IMR-90 (cell line): ENCODE measurements at regions of chr5 and their contacts with region 1.

Region 1: GRCh38 chr5:107673368-107674136 is 2.8 kb upstream of the EFNA5 start:
- DNase-seq: peak; percentile 87
- ATAC-seq: peak; percentile 62
- H3K4me3 ChIP-seq: peak overlapping the region; percentile 52
- H3K27ac ChIP-seq: no peak overlapping the region
- H3K4me1 ChIP-seq: no peaks in the 10 kb centered on the region
- H3K27me3 ChIP-seq: peaks cover 8% of the 10 kb centered on the region; the same call in 1 of the 2 replicates
- CTCF ChIP-seq: peak; percentile 96
- POLR2A ChIP-seq: no peak
- RAD21 ChIP-seq: peak; percentile 94

Region 2: GRCh38 chr5:106269252-106269843 is 1404.2 kb before region 1 on chr5:
- CTCF ChIA-PET with region 1: interaction called, 4 read pairs
- POLR2A ChIA-PET with region 1: no interaction called
- dilution Hi-C with region 1: no loop called
- in situ Hi-C with region 1: loop called (anchors 10 kb)
- intact Hi-C with region 1: loop called (anchors 1 kb)
- DNase-seq: peak; percentile 57
- ATAC-seq: peak; percentile 69
- H3K4me3 ChIP-seq: no peak overlapping the region
- H3K27ac ChIP-seq: no peak overlapping the region
- H3K4me1 ChIP-seq: no peaks in the 10 kb centered on the region
- H3K27me3 ChIP-seq: no peaks in the 10 kb centered on the region
- CTCF ChIP-seq: peak; percentile 71
- POLR2A ChIP-seq: no peak
- RAD21 ChIP-seq: peak; percentile 73

Region 3: DNA sequence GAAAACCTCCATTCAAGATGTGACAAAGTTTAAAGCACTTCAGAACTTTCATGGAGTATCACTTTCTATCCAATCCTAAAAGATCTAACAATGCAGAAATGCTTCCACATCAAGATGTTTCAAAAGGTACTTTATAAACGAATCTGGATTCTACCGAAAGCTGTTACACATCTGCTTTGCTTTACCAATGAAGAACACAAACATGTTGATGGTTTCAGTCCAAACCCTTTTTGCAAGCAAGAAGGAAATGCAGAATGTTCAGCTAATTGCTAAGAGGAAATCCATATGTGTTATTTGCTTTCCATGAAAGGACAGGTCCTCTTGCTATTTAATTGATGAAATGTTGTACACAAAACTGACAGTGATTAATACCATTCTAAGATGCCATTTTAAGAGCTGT is 422.4 kb before region 1 on chr5:
- CTCF ChIA-PET with region 1: no interaction called
- POLR2A ChIA-PET with region 1: no interaction called
- dilution Hi-C with region 1: no loop called
- in situ Hi-C with region 1: no loop called
- intact Hi-C with region 1: loop called (anchors 2 kb)
- DNase-seq: no peak
- ATAC-seq: no peak
- H3K4me3 ChIP-seq: no peak overlapping the region
- H3K27ac ChIP-seq: peak overlapping the region; percentile 66; the same call in 1 of the 2 replicates
- H3K4me1 ChIP-seq: no peaks in the 10 kb centered on the region; the same call in 1 of the 2 replicates
- H3K27me3 ChIP-seq: no peaks in the 10 kb centered on the region
- CTCF ChIP-seq: no peak
- POLR2A ChIP-seq: no peak
- RAD21 ChIP-seq: no peak

Region 4: DNA sequence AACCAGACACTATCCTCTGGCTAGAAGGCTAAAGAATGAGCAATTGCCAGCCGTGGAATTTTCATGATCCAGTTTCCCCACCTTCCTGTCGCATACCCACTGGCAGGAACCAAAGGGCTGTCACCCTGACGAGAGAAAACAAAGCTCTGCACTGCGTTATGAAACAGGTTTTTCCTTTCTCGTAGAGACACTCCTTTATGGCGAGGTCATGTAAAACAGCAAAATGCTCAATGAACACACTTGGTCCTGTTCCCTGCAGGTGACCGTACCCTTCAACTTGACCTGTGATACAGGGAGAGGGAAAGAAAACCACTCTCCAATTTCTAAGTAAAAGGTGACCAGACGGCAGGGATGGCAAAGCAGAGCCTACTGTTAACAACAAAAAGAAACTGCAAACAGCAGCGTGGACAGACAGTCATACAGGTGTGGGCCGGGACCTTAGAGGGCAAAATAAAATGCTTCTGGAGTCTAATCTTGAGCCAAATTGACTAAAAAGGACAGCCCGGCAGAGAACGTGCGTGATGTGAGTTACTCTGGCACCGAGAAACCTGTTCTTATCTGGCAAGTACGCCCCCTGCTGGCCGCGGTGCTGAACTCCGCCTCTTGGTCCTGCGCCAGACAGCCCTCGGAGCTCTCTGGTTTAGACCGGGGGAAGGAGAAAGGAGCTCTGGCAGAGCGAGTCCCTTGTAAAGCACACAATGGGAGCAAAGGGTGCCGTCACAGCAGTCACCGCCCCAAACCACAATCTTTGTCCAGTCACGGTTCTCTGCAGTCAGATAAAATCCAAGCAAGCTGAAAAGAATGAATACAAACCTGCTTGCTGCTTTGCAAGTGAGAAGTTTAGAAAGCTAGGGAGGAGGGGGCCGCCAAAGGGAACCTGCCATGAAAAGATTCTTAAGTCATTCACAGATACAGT is 101.7 kb before region 1 on chr5:
- CTCF ChIA-PET with region 1: interaction called, 5 read pairs
- POLR2A ChIA-PET with region 1: no interaction called
- dilution Hi-C with region 1: no loop called
- in situ Hi-C with region 1: no loop called
- intact Hi-C with region 1: loop called (anchors 2 kb)
- DNase-seq: peak; percentile 84
- ATAC-seq: peak; percentile 91
- H3K4me3 ChIP-seq: peak overlapping the region; percentile 32; the same call in 1 of the 2 replicates
- H3K27ac ChIP-seq: no peak overlapping the region
- H3K4me1 ChIP-seq: 0 out of 2 replicates have a peak, but pooled peaks cover 1% of the 10 kb centered on the region
- H3K27me3 ChIP-seq: no peaks in the 10 kb centered on the region
- CTCF ChIP-seq: peak; percentile 85
- POLR2A ChIP-seq: no peak
- RAD21 ChIP-seq: peak; percentile 83

Region 5: GRCh38 chr5:107618242-107618641 is 55.3 kb before region 1 on chr5:
- CTCF ChIA-PET with region 1: no interaction called
- POLR2A ChIA-PET with region 1: no interaction called
- dilution Hi-C with region 1: no loop called
- in situ Hi-C with region 1: no loop called
- intact Hi-C with region 1: no loop called
- DNase-seq: no peak
- ATAC-seq: no peak
- H3K4me3 ChIP-seq: no peak overlapping the region
- H3K27ac ChIP-seq: no peak overlapping the region
- H3K4me1 ChIP-seq: no peaks in the 10 kb centered on the region
- H3K27me3 ChIP-seq: no peaks in the 10 kb centered on the region
- CTCF ChIP-seq: no peak
- POLR2A ChIP-seq: no peak
- RAD21 ChIP-seq: no peak

Region 6: GRCh38 chr5:108193021-108193795 is 519.7 kb after region 1 on chr5:
- CTCF ChIA-PET with region 1: no interaction called
- POLR2A ChIA-PET with region 1: no interaction called
- dilution Hi-C with region 1: no loop called
- in situ Hi-C with region 1: no loop called
- intact Hi-C with region 1: loop called (anchors 2 kb)
- DNase-seq: peak; percentile 75
- ATAC-seq: peak; percentile 93
- H3K4me3 ChIP-seq: no peak overlapping the region
- H3K27ac ChIP-seq: no peak overlapping the region
- H3K4me1 ChIP-seq: peaks cover 3% of the 10 kb centered on the region; the same call in 1 of the 2 replicates
- H3K27me3 ChIP-seq: no peaks in the 10 kb centered on the region
- CTCF ChIP-seq: no peak
- POLR2A ChIP-seq: no peak
- RAD21 ChIP-seq: no peak

Region 7: DNA sequence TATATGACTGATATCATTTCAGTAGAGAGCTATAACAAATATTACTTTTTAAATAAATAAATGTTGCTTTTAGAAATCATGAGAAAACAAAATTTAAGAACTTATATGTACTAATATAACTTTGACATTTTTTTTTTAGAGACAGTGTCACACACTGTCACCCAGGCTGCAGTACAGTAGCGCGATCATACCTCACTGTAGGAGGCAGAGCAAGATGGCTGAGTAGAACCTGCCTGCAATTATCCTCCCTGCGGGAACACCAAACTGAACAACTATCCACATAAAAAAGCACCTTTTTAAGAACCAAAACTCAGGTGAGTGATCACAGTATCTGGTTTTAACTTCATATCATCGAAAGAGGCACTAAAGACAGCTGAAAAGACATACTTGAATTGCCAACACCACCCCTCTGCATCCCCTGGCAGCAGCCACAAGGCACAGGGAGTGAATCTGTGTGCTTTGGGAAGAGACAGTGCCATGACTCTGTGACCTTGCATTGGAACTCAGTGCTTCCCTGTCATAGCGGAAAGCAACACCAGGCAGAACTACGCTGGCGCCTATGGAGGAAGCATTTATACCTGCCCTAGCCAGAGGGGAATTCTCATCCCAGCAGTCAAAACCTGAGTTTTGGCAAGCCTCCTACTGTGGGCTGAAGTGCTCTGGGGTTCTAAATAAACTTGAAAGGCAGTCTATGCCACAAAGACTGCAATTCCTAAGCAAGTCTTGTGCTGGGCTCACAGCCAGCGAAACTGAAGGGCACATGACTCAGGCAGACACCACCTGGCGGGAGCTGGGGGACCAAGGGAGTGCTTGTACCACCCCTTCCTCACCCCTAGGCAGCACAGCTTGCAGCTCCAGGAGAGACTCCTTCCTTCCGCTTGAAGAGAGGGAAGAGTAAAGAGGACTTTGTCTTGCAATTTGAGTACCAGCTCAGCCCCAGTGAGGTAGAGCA is 565.7 kb after region 1 on chr5:
- CTCF ChIA-PET with region 1: no interaction called
- POLR2A ChIA-PET with region 1: no interaction called
- dilution Hi-C with region 1: no loop called
- in situ Hi-C with region 1: no loop called
- intact Hi-C with region 1: no loop called
- DNase-seq: no peak
- ATAC-seq: no peak
- H3K4me3 ChIP-seq: no peak overlapping the region
- H3K27ac ChIP-seq: no peak overlapping the region
- H3K4me1 ChIP-seq: no peaks in the 10 kb centered on the region
- H3K27me3 ChIP-seq: no peaks in the 10 kb centered on the region
- CTCF ChIP-seq: no peak
- POLR2A ChIP-seq: no peak
- RAD21 ChIP-seq: no peak

Region 8: GRCh38 chr5:108345541-108346171 is 672.1 kb after region 1 on chr5:
- CTCF ChIA-PET with region 1: no interaction called
- POLR2A ChIA-PET with region 1: no interaction called
- dilution Hi-C with region 1: no loop called
- in situ Hi-C with region 1: no loop called
- intact Hi-C with region 1: loop called (anchors 2 kb)
- DNase-seq: peak; percentile 67
- ATAC-seq: peak; percentile 60
- H3K4me3 ChIP-seq: no peak overlapping the region
- H3K27ac ChIP-seq: no peak overlapping the region
- H3K4me1 ChIP-seq: no peaks in the 10 kb centered on the region
- H3K27me3 ChIP-seq: no peaks in the 10 kb centered on the region
- CTCF ChIP-seq: peak; percentile 54
- POLR2A ChIP-seq: no peak
- RAD21 ChIP-seq: peak; percentile 69